ENCODE measurements at regions of chr2 and their contacts with region 1.

Region 1: GRCh38 chr2:180980106-180980942 is at the start of gene UBE2E3:
- DNase-seq: no peak
- ATAC-seq: peak; percentile 87
- H3K4me3 ChIP-seq: peak within 1 kb of the TSS; percentile 76
- H3K27ac ChIP-seq: 0 out of 2 replicates have a peak within 1 kb of the TSS, but pooled peaks have one; percentile 10
- H3K4me1 ChIP-seq: peaks cover 8% of the 10 kb centered on the region
- H3K27me3 ChIP-seq: no peaks in the 10 kb centered on the region; a peak in 1 of 4 replicates
- CTCF ChIP-seq: peak; percentile 55 to 82 (median 64)
- EP300 ChIP-seq: no peak
- POLR2A ChIP-seq: peak; percentile 70; the same call in 1 of the 2 replicates
- RAD21 ChIP-seq: peak; percentile 50
- polyA plus RNA-seq, gene UBE2E3: 14.9 to 22.7 TPM

Region 2: GRCh38 chr2:180125245-180125962 is 854.9 kb before region 1 on chr2:
- CTCF ChIA-PET with region 1: interaction called, 7 read pairs
- POLR2A ChIA-PET with region 1: no interaction called
- RAD21 ChIA-PET with region 1: interaction called, 9 read pairs
- SMC1A ChIA-PET with region 1: interaction called, 3 read pairs
- in situ Hi-C with region 1: no loop called
- intact Hi-C with region 1: loop called (anchors 5 kb)
- DNase-seq: peak; percentile 12
- ATAC-seq: peak; percentile 90
- H3K4me3 ChIP-seq: no peak overlapping the region
- H3K27ac ChIP-seq: no peak overlapping the region
- H3K4me1 ChIP-seq: no peaks in the 10 kb centered on the region
- H3K27me3 ChIP-seq: no peaks in the 10 kb centered on the region; a peak in 1 of 4 replicates
- CTCF ChIP-seq: peak; percentile 45 to 59 (median 50); a peak in 5 of 6 replicates
- EP300 ChIP-seq: no peak
- POLR2A ChIP-seq: no peak
- RAD21 ChIP-seq: peak; percentile 58

Region 3: GRCh38 chr2:180970016-180970415 is 10.3 kb before region 1 on chr2:
- CTCF ChIA-PET with region 1: interaction called, 11 read pairs
- POLR2A ChIA-PET with region 1: interaction called, 5 read pairs
- RAD21 ChIA-PET with region 1: interaction called, 3 read pairs
- SMC1A ChIA-PET with region 1: interaction called, 10 read pairs
- in situ Hi-C with region 1: no loop called
- intact Hi-C with region 1: no loop called
- DNase-seq: no peak
- ATAC-seq: no peak
- H3K4me3 ChIP-seq: no peak overlapping the region
- H3K27ac ChIP-seq: no peak overlapping the region
- H3K4me1 ChIP-seq: no peaks in the 10 kb centered on the region
- H3K27me3 ChIP-seq: no peaks in the 10 kb centered on the region; a peak in 1 of 4 replicates
- CTCF ChIP-seq: no peak
- EP300 ChIP-seq: no peak
- POLR2A ChIP-seq: no peak
- RAD21 ChIP-seq: no peak

Region 4: DNA sequence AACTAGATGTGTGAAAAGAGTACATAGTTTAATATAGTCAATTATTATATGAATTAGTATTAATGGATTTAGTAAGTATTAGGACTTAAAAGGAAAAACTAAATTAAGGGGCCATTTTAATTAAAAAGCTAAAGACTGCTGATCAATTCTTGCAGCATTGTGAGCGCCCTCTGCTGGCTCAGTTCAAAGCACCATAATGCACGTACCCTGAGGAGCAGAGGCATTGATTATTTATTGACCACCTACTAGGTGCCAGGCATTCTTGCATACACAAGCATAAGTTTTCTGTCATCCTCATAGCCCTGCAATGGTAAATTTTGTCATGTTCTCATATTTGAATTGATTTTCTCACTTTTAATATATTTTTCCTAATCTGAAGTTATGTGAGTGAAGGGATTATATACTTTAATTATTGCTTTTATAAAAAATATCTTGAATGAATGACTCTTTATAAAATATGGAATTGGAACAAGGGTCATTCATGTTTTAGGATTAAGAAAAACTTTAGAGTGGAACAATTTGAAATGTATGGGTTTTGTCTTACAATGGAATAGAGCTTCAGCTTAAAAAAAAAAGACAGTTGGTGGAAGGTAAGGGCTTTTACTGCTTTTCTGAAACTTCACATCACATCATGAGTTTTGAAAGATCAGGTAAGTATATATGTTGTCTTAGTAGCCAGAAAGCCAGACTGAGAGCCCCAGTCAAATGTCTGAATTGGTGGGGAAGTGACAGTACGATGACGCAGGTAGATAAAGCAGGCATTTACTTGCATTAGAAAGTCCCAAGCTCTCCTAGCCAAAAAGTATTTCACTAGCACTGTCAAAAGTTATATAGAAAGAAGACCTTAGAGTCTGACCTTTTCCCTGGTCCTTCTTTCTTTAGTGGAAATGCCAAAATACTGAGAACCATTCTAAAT is 486.6 kb after region 1 on chr2:
- CTCF ChIA-PET with region 1: interaction called, 3 read pairs
- POLR2A ChIA-PET with region 1: no interaction called
- RAD21 ChIA-PET with region 1: no interaction called
- SMC1A ChIA-PET with region 1: no interaction called
- in situ Hi-C with region 1: no loop called
- intact Hi-C with region 1: loop called (anchors 10 kb)
- DNase-seq: no peak
- ATAC-seq: peak; percentile 66
- H3K4me3 ChIP-seq: no peak overlapping the region
- H3K27ac ChIP-seq: no peak overlapping the region
- H3K4me1 ChIP-seq: peaks cover 31% of the 10 kb centered on the region
- H3K27me3 ChIP-seq: no peaks in the 10 kb centered on the region
- CTCF ChIP-seq: peak; percentile 74 to 81 (median 79)
- EP300 ChIP-seq: no peak
- POLR2A ChIP-seq: no peak
- RAD21 ChIP-seq: peak; percentile 70

Measured in GM12878 (cell line).